HepG2 (cell line): ENCODE measurements at regions of chr2 and their contacts with region 1.

Region 1: DNA sequence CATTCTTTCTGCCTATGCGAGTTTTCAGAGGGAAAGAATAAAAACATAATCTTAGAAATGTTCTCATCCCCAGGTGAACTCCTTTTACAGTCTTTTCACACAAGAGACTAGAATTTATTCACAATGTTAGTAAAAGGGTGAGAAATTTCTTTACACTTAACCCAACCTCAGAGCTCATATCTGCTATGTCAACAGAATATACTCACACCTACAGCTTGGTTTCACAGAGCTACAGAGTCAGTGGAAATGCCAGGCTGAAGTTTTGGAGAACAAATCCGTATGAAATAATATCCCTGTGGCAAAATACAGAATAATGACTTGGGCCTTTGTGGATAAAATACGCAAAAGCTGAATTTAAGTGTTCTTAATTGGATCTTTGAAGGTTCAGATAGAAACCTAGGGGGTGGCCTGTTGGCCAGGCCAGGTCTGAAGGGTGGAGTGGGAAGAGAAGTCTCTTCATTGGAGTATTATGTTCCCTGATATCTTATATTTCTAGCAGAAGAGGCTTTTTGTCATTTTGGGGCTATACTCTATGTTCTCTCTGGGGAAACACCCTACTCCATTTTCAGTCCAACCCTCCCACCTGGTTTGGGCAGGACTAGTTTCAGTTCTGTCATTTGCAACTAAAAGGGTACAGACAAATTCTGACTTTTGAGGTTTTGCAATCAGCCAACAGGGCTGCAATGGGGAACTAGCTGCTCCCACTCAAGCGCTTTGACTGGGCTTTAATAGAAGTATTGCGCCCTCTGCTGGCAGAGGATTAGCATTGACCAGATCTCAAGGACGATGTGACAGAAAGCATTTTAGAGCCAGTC is 25.7 kb downstream of the FBXO48 start:
- DNase-seq: peak; percentile 89
- ATAC-seq: peak; percentile 94
- H3K4me3 ChIP-seq: no peak overlapping the region
- H3K27ac ChIP-seq: no peak overlapping the region
- H3K4me1 ChIP-seq: no peaks in the 10 kb centered on the region; the same call in 1 of the 2 replicates
- H3K27me3 ChIP-seq: peaks cover 0 to 11% of the 10 kb centered on the region in 2 experiments; a peak in 1 of 5 replicates
- CTCF ChIP-seq: peak; percentile 91
- EP300 ChIP-seq: no peak
- POLR2A ChIP-seq: no peak
- RAD21 ChIP-seq: peak; percentile 73; the same call in 1 of the 2 replicates

Region 2: DNA sequence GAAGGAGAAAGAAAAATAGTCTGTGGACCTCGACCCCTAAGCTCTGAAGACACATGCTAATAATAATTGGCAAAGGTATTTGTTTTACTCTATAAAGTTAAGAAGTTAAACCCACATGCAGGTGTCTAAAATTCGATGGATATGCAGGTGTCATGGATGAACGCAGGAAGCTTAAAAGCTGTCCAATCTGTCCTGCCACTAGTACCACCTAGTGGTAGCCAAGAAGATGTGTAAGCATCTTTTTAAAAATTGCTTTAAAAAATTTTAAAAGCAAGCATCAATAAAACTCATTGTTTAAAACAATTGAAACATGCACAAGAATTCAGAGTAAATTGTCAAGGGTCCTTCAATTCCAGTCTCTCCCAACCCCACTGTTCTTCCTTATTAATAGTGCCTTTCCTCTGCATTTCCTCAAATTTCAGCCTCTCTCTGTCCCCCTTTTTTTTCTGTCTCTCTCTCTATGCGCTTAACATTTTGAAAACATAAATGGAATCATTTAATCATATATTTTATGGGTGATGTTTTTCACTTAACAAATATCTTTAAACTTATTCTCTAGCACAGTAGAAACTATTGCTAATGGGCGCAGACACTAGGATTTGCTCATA is 158.5 kb before region 1 on chr2:
- CTCF ChIA-PET with region 1: no interaction called
- POLR2A ChIA-PET with region 1: no interaction called
- in situ Hi-C with region 1: no loop called
- intact Hi-C with region 1: loop called (anchors 5 kb)
- DNase-seq: peak; percentile 53
- ATAC-seq: peak; percentile 78
- H3K4me3 ChIP-seq: no peak overlapping the region
- H3K27ac ChIP-seq: no peak overlapping the region
- H3K4me1 ChIP-seq: peaks cover 9% of the 10 kb centered on the region
- H3K27me3 ChIP-seq: peaks cover 0 to 5% of the 10 kb centered on the region in 2 experiments; a peak in 1 of 5 replicates
- CTCF ChIP-seq: peak; percentile 72
- EP300 ChIP-seq: no peak
- POLR2A ChIP-seq: no peak
- RAD21 ChIP-seq: peak; percentile 58

Region 3: DNA sequence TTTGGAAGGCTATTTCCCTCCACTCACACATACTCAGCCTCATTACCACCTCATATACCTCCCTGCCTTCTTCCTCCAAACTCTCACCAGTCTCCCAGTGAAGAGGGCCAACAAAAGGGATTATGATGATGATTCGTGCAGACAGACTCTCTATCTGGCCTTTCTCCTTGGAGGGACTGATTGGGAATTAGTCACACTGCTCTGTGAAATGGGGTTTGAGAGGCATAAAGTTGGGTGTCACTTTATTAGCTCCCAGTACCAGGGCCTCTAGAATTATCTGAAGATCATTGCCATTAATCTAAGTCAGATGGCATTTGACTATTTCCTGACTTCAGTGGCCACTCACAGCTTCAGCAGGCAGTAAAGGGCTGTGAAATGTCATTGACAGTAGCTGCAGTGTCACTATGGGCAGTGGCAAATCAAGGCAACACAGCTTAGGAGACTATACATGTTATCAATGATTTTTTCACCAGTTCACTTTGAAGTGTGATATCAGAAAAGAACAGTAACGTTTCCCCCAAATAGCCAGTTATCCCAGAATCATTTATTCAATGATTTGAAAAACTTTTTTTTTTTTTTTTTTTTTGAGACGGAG is 139.0 kb before region 1 on chr2:
- CTCF ChIA-PET with region 1: no interaction called
- POLR2A ChIA-PET with region 1: no interaction called
- in situ Hi-C with region 1: no loop called
- intact Hi-C with region 1: loop called (anchors 5 kb)
- DNase-seq: no peak
- ATAC-seq: peak; percentile 19; the same call in 1 of the 3 replicates
- H3K4me3 ChIP-seq: peak overlapping the region in 1 of 3 experiments; percentile 29; a peak in 1 of 6 replicates
- H3K27ac ChIP-seq: no peak overlapping the region
- H3K4me1 ChIP-seq: peaks cover 23% of the 10 kb centered on the region
- H3K27me3 ChIP-seq: peaks cover 0 to 1% of the 10 kb centered on the region in 2 experiments; a peak in 2 of 5 replicates
- CTCF ChIP-seq: no peak
- EP300 ChIP-seq: no peak
- POLR2A ChIP-seq: no peak
- RAD21 ChIP-seq: no peak

Region 4: GRCh38 chr2:68362069-68362468 is 79.3 kb before region 1 on chr2:
- CTCF ChIA-PET with region 1: interaction called, 14 read pairs
- POLR2A ChIA-PET with region 1: no interaction called
- in situ Hi-C with region 1: loop called (anchors 5 kb)
- intact Hi-C with region 1: loop called (anchors 1 kb)
- DNase-seq: peak; percentile 66
- ATAC-seq: peak; percentile 64
- H3K4me3 ChIP-seq: no peak overlapping the region
- H3K27ac ChIP-seq: no peak overlapping the region
- H3K4me1 ChIP-seq: no peaks in the 10 kb centered on the region
- H3K27me3 ChIP-seq: peaks cover 0 to 22% of the 10 kb centered on the region in 2 experiments; a peak in 3 of 5 replicates
- CTCF ChIP-seq: peak; percentile 85
- EP300 ChIP-seq: peak in 1 of 2 experiments; percentile 24; a peak in 1 of 4 replicates
- POLR2A ChIP-seq: no peak
- RAD21 ChIP-seq: peak; percentile 57

Region 5: DNA sequence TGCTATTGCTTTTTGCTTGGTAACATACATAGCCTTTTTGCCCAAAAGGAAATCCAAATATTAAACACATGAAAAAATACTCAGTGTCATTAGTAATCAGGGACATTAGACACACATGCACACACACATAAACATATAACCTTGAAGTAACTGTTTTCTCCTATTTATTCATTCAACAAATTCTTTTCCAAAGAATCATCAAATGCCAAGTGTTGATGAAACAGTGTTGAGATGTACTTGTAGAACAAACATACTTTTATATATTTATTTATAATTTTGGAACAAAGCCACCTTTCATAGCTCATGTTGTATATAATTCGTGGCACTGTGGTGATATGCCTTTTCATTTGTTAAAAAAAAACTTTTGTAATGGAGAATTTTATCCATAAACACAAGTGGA is 107.0 kb after region 1 on chr2:
- CTCF ChIA-PET with region 1: no interaction called
- POLR2A ChIA-PET with region 1: no interaction called
- in situ Hi-C with region 1: no loop called
- intact Hi-C with region 1: no loop called
- DNase-seq: no peak
- ATAC-seq: no peak
- H3K4me3 ChIP-seq: no peak overlapping the region
- H3K27ac ChIP-seq: no peak overlapping the region
- H3K4me1 ChIP-seq: no peaks in the 10 kb centered on the region
- H3K27me3 ChIP-seq: no peaks in the 10 kb centered on the region
- CTCF ChIP-seq: no peak
- EP300 ChIP-seq: no peak
- POLR2A ChIP-seq: no peak
- RAD21 ChIP-seq: no peak